WTC11 (cell line): ENCODE measurements at regions of chr10 and their contacts with region 1.

Region 1: DNA sequence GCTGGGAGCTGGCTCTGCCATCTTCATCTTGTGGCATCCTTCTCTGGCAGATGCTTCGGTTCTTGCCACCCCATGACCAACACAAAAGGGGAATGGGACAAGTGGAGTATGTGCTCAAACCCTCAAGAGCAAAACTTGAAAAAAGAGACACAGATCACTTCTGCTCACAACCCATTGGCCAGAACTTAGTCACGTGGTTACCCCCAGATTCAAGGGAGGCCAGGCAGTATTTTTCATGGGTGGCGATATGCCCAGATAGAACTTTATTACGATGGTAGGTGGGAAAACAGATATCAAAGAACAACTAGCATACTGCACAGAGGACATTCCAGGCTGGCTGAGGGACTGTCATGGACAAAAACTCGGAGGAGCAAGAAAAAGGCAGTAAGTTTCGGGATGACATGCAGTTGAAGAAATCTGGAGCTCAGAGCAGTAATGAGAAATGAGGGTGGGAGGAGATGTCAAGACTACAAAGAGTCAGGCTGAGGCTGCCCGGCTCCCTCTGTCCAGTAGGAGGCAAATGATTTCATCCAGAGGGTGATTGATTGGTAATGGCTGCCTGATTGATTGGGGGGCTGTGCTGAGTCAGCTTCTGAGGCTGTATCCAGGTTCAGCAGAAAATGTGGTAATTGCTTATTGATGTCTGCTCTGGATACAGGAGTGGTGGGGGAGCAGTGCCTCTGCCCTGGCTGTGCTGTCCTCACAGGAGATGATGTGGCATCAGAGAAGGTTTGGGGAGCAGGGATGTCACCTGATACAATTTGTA is 25.3 kb downstream of the COL13A1 start:
- DNase-seq: peak; percentile 36
- ATAC-seq: peak; percentile 79
- H3K4me3 Mint-ChIP-seq: no peak overlapping the region
- H3K27ac Mint-ChIP-seq: no peak overlapping the region
- H3K4me1 Mint-ChIP-seq: peaks cover 24% of the 10 kb centered on the region
- H3K27me3 Mint-ChIP-seq: peaks cover 5% of the 10 kb centered on the region; the same call in 1 of the 2 replicates
- CTCF ChIP-seq: no peak

Region 2: GRCh38 chr10:69807122-69807521 is 19.9 kb before region 1 on chr10:
- CTCF ChIA-PET with region 1: interaction called, 11 read pairs
- POLR2A ChIA-PET with region 1: no interaction called
- DNase-seq: no peak
- ATAC-seq: no peak
- H3K4me3 Mint-ChIP-seq: no peak overlapping the region
- H3K27ac Mint-ChIP-seq: no peak overlapping the region
- H3K4me1 Mint-ChIP-seq: peaks cover 38% of the 10 kb centered on the region
- H3K27me3 Mint-ChIP-seq: peaks cover 33% of the 10 kb centered on the region
- CTCF ChIP-seq: no peak

Region 3: DNA sequence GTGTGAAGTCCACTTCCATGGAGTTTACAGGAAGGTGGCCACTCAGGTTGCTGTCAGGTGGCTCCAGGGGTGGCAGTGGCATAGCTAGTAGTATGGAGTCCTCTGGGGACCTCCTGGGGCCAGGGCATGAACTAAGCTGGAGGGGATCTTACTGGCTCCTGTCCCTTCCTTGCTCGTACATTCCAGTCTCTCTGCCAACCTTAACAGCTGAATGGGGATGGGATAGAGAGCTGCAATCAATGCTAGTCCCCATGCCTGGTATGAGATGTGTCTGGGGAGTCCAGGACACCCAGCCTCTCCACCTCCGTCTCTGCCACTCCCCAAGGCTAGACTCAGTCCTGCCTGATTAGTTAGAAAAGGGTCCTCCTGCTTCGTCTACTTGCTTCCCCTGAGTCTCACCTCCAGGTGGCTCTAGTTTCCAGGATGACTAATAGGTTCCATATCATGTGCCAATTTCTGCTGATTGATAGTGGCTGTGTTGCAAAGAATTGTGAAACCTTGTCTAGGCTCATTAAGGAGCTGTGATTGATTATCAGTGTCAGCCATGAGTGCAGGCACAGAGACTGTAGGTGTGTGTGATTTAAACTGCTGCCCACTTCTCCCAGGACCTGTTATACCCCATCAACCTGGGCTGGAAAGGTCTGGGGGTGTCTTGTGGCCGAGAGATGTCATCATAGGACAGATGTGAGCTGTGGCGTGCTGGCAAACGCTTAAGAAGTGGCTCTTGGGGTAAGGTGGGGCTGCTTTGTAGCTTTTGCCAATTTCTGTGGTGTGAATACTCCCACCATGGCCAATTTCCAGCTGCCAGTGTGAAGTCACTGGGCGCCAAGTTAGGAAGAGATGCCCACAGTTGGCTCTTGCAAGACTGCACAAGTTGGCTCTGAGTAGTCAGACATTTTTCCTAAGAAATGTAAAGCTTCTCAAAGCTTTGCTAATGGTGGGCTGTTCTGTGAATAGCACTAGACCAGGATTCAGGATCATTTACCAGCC is 34.6 kb after region 1 on chr10:
- CTCF ChIA-PET with region 1: interaction called, 11 read pairs
- POLR2A ChIA-PET with region 1: no interaction called
- DNase-seq: no peak
- ATAC-seq: peak; percentile 73
- H3K4me3 Mint-ChIP-seq: no peak overlapping the region
- H3K27ac Mint-ChIP-seq: no peak overlapping the region
- H3K4me1 Mint-ChIP-seq: peaks cover 59% of the 10 kb centered on the region
- H3K27me3 Mint-ChIP-seq: peaks cover 9% of the 10 kb centered on the region
- CTCF ChIP-seq: no peak

Region 4: GRCh38 chr10:69895759-69896158 is 68.8 kb after region 1 on chr10:
- CTCF ChIA-PET with region 1: no interaction called
- POLR2A ChIA-PET with region 1: no interaction called
- DNase-seq: no peak
- ATAC-seq: no peak
- H3K4me3 Mint-ChIP-seq: no peak overlapping the region
- H3K27ac Mint-ChIP-seq: no peak overlapping the region
- H3K4me1 Mint-ChIP-seq: peaks cover 26% of the 10 kb centered on the region
- H3K27me3 Mint-ChIP-seq: peaks cover 7% of the 10 kb centered on the region
- CTCF ChIP-seq: no peak

Region 5: DNA sequence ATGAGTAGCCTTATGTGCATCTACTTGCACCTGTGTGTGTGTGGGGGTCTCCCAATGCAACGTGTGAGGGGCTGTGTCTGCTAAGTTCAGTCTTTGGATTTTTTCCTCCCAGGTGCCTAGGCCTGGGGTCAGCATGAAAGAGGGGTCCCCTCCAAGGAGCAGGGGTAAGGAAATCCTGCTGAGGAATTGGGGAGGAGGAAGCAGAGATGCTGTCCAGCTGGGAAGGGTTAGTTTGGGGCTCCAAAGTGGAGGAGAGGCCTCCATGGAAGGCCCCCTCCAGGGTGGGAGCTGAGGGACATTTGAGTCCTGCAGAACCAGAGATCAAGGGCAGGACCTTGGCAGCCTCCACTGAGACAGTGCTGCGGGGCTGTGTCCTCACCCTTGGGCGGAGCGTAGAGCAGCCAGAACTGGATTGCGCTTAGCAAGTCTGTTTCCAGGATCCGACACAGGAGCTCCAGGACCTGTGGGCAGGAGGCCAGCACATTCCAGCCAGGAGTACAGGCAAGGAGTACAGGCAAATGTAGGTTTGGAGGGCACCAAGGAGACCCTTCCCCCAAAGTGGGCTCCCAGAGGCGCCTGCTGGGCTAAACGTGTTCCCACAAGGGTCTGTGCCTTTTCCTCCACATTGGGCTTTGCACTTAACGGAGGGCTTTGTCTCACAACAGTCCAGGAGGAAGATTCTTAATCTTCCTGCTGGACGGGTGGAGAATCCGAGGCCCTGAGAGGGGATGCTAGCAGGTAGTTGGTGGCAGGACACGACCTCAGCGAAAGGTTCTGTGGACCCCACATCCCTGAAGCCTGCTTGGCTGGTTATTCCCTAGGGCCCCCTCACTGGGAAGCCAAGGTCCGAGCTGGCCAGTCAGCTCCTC is 948.1 kb after region 1 on chr10:
- CTCF ChIA-PET with region 1: no interaction called
- POLR2A ChIA-PET with region 1: no interaction called
- DNase-seq: no peak
- ATAC-seq: no peak
- H3K4me3 Mint-ChIP-seq: no peak overlapping the region
- H3K27ac Mint-ChIP-seq: no peak overlapping the region
- H3K4me1 Mint-ChIP-seq: peaks cover 3% of the 10 kb centered on the region; the same call in 1 of the 2 replicates
- H3K27me3 Mint-ChIP-seq: no peaks in the 10 kb centered on the region; the same call in 1 of the 2 replicates
- CTCF ChIP-seq: no peak